Activated CD8-positive, alpha-beta T cell treated with anti-CD3 and anti-CD28 coated beads for 36 hours (primary cell): ENCODE measurements at regions of chrX and their contacts with region 1.

Region 1: DNA sequence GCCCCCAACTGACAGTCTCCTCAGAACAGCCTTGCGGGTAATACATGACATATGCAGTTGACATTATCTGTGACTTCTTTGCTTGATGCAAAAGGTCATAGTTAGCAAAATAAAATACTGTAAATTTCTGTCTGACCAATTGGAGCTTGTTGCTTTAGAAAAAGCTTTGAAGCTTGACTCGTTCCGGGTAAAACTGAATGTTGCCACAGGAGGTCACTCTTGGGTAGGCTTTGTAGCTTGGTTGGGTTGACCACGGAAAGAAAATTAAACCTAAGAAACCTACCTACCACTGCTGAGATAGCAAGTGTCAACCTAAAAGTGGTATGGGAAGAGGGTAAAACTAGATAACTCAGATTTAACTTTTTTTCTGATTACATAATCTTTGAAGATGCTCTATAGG is 23.2 kb downstream of the PRPS2 start:
- DNase-seq: peak; percentile 56
- ATAC-seq: peak; percentile 61
- H3K4me3 Mint-ChIP-seq: no peak overlapping the region
- H3K27ac Mint-ChIP-seq: no peak overlapping the region
- H3K4me1 Mint-ChIP-seq: peaks cover 2% of the 10 kb centered on the region
- H3K27me3 Mint-ChIP-seq: no peaks in the 10 kb centered on the region
- CTCF ChIP-seq: peak; percentile 39

Region 2: DNA sequence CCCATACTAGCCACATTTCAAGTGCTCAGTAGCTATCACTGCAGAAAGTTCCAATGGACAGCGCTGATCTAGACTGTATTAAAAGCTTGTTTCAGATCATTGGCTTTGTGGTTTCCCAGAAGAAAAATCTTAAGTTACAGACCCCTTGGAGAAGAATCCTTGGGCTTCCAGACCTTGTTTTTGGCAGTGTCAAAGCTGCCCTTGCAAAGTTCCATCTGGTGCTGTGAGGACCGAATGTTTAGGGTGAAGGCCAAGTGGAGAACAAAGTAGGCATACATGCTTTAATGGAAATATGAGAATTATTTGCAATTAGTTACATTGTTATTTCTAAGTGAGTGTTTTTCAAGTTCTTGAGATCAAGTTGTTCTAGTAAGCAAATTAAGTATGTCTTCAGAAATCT is 531.4 kb before region 1 on chrX:
- CTCF ChIA-PET with region 1: no interaction called
- POLR2A ChIA-PET with region 1: no interaction called
- intact Hi-C with region 1: no loop called
- DNase-seq: no peak
- ATAC-seq: no peak
- H3K4me3 Mint-ChIP-seq: no peak overlapping the region
- H3K27ac Mint-ChIP-seq: no peak overlapping the region
- H3K4me1 Mint-ChIP-seq: no peaks in the 10 kb centered on the region
- H3K27me3 Mint-ChIP-seq: peaks cover 3% of the 10 kb centered on the region
- CTCF ChIP-seq: no peak

Region 3: DNA sequence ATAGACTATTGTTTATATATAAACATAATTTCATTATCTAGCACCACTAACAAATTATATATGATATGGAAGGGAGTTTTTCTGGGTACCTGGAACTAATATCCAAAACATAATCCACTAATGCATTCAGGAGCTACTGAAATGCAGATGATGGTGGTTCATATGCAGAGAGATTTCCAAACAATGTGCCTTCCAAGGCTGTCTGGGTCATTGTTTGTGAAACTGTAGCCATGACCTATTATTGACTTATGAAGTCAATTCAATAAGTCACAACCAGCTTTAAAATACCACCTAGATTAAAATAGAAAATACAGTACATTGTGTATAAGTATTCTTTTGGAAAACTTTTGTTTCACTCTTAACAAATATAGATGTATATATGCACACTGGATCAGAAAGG is 260.2 kb before region 1 on chrX:
- CTCF ChIA-PET with region 1: no interaction called
- POLR2A ChIA-PET with region 1: no interaction called
- intact Hi-C with region 1: no loop called
- DNase-seq: no peak
- ATAC-seq: no peak
- H3K4me3 Mint-ChIP-seq: no peak overlapping the region
- H3K27ac Mint-ChIP-seq: no peak overlapping the region
- H3K4me1 Mint-ChIP-seq: no peaks in the 10 kb centered on the region
- H3K27me3 Mint-ChIP-seq: no peaks in the 10 kb centered on the region
- CTCF ChIP-seq: no peak

Region 4: GRCh38 chrX:12894074-12895030 is 79.9 kb after region 1 on chrX:
- CTCF ChIA-PET with region 1: interaction called, 25 read pairs
- POLR2A ChIA-PET with region 1: interaction called, 3 read pairs
- intact Hi-C with region 1: loop called (anchors 2 kb)
- DNase-seq: peak; percentile 67
- ATAC-seq: peak; percentile 52
- H3K4me3 Mint-ChIP-seq: no peak overlapping the region
- H3K27ac Mint-ChIP-seq: no peak overlapping the region
- H3K4me1 Mint-ChIP-seq: peaks cover 40% of the 10 kb centered on the region
- H3K27me3 Mint-ChIP-seq: no peaks in the 10 kb centered on the region
- CTCF ChIP-seq: peak; percentile 72

Region 5: GRCh38 chrX:12901486-12901885 is 87.1 kb after region 1 on chrX:
- CTCF ChIA-PET with region 1: interaction called, 21 read pairs
- POLR2A ChIA-PET with region 1: no interaction called
- intact Hi-C with region 1: no loop called
- DNase-seq: peak; percentile 81
- ATAC-seq: peak; percentile 56
- H3K4me3 Mint-ChIP-seq: no peak overlapping the region
- H3K27ac Mint-ChIP-seq: no peak overlapping the region
- H3K4me1 Mint-ChIP-seq: peaks cover 10% of the 10 kb centered on the region
- H3K27me3 Mint-ChIP-seq: no peaks in the 10 kb centered on the region
- CTCF ChIP-seq: peak; percentile 64